Activated T-helper 2 cell treated with anti-CD3 and anti-CD28 coated beads, Interferon-gamma antibody, Interleukin-2, Interleukin-4, amounts not matched to agents 10 μg/mL and 5 μg/mL and 100 μg/mL, durations not matched to agents 14 hours and 24 hours and 36 hours (primary cell): ENCODE measurements at regions of chr3 and their contacts with region 1.

Region 1: GRCh38 chr3:57397175-57398026 is 104.9 kb upstream of the ASB14 start:
- DNase-seq: peak; percentile 57
- H3K4me3 Mint-ChIP-seq: no peak overlapping the region
- H3K27ac Mint-ChIP-seq: peak overlapping the region; percentile 14
- H3K4me1 Mint-ChIP-seq: peaks cover 11% of the 10 kb centered on the region
- H3K27me3 Mint-ChIP-seq: peaks cover 17% of the 10 kb centered on the region

Region 2: DNA sequence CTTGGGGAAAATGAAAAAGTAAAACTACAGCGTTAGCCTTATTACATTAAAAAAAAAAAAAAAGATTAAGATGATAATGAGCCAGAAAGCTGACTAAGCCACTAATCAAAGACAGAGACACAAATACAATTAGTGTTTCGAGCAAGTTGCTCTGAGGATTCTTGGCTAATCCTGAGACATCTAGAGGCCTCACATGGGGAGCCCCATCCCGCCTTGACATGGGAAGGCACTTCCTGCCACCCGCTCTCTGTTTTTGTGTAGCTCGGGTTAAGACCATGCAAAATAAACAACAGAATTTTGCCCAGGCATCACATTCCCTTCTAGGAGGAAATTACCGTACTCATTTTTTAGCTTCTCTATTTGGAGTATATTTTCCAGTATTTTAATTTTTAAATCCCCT is 212.9 kb before region 1 on chr3:
- intact Hi-C with region 1: no loop called
- DNase-seq: no peak
- H3K4me3 Mint-ChIP-seq: no peak overlapping the region
- H3K27ac Mint-ChIP-seq: no peak overlapping the region
- H3K4me1 Mint-ChIP-seq: no peaks in the 10 kb centered on the region
- H3K27me3 Mint-ChIP-seq: peaks cover 7% of the 10 kb centered on the region

Region 3: DNA sequence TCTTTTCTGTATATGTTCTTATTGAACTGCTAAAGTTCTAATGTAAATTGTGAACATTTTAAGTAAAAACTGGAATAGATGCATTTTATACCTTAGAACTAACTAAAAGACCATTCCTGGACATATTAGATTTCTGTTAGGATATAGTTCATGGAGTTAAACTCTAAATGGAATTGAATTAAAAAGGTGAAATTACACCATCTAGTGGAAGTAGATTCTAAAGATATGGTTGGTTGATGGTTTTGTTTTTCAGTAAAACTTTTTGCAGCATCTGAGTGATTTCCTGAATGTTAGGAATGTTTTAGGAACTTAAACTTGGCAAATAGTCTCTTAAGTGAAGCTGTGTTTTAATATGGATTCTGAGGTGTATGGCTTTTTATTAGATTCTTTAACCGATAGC is 455.5 kb after region 1 on chr3:
- intact Hi-C with region 1: loop called (anchors 10 kb)
- DNase-seq: no peak
- H3K4me3 Mint-ChIP-seq: no peak overlapping the region
- H3K27ac Mint-ChIP-seq: no peak overlapping the region
- H3K4me1 Mint-ChIP-seq: no peaks in the 10 kb centered on the region
- H3K27me3 Mint-ChIP-seq: no peaks in the 10 kb centered on the region

Region 4: DNA sequence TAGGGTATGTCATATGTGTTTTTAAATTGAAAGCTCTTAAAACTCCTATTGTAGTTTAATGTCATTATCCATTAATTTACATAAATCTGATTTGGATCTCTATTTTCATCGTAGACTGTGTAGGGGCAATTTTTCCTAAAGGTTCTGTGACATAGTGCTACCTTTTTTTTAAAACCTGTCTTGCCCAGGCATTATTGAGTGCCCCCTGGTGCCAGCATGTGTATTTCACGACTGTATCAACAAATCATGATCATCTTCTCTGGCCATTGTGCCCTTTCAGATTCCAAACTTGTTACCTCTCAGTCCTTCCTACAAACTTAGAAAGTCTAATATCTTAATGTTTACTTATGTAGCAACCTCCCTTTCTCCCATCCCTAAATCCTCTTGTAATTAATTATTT is 513.6 kb after region 1 on chr3:
- intact Hi-C with region 1: loop called (anchors 2 kb)
- DNase-seq: no peak
- H3K4me3 Mint-ChIP-seq: no peak overlapping the region
- H3K27ac Mint-ChIP-seq: no peak overlapping the region
- H3K4me1 Mint-ChIP-seq: no peaks in the 10 kb centered on the region
- H3K27me3 Mint-ChIP-seq: no peaks in the 10 kb centered on the region